ENCODE measurements at regions of chr7 and their contacts with region 1.

Region 1: DNA sequence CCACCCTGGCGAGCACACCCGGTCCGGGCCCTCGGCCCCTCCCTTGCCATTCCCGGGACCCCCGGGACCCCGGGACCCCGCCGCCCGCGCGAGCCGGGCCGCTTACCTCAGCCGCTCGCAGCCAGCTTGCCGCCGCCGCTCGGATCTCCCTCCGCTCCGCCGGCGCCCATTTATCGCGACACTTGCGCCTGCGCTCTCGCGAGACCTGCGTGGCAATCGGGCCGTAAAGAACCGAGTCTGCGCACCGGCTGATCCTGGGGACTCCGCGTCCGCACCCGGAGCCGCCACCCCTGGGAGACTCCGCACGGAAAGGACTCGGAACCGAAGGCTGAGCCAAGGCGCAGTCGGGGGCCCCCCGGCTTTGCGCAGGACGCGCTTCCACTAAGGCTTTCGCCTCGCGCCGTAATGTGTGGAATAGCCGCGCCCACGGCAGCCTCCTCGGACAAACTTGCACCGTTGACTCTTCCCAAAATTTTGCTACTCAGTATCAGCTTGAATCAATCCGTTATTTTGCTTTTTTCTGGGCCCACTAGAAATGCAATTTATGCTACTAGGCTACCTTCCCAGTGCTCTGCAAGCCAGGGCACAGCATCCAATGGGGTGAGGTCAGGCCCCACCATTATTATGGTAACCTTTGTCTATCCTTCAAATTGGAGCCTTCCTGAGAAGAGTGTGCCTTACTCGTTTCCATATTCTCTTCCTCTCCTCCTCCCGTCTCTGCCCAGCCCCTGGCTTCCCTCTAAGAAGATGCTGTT is at the start of gene MAD1L1:
- DNase-seq: peak; percentile 75 to 90 (median 88)
- ATAC-seq: peak; percentile 90
- H3K4me3 ChIP-seq: peak within 1 kb of the TSS; percentile 99
- H3K4me3 Mint-ChIP-seq: peak within 1 kb of the TSS; percentile 88 to 98 (median 95)
- H3K27ac ChIP-seq: peak within 1 kb of the TSS; percentile 80
- H3K27ac Mint-ChIP-seq: peak within 1 kb of the TSS; percentile 66 to 91 (median 86)
- H3K4me1 ChIP-seq: peaks cover 13 to 27% of the 10 kb centered on the region in 2 donors
- H3K4me1 Mint-ChIP-seq: peaks cover 16 to 58% (median 31%) of the 10 kb centered on the region in 7 donors
- H3K27me3 ChIP-seq: no peaks in the 10 kb centered on the region
- H3K27me3 Mint-ChIP-seq: no peaks in the 10 kb centered on the region
- total RNA-seq, gene MAD1L1: 112 to 141 (median 125) TPM

Region 2: DNA sequence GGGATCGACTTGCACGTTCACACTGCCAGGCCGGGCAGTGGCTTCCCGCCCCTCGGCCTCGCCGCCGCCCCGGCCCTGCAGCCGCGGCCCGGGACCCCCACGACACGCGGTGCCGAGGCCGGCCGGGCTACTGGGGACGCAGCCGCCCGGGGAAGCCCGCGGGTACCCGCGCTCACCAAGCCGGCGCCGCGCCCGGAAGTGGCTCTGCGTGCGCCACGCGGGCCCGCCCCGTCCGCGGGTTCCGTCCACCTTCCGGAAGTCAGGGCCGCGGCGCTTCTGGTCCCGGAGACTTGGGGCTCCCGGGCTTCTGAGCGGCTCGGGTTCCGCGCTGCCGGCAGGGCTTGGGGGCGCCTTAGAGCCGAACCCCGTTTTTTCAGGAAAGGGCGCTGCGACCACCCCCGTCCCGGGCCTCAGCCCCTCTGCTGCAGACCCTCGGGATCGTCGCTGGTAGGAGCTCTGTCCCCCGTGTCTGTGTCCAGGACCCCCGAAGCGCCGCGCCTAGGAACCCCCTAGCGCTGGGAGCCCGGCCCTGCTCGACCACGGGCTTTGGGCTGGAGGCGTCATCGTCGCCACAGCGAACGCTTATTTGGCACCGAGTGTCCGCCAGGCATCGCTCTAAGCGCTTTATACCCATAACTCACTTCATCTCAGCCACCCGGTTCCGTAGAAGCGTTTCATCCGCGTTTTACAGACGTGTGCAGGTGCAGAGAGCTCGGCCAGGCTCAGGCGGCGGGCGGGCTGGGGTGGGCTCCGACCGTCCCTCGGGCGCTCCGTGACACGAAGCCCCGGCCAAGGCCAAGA is 662.9 kb before region 1 on chr7 and contains the start of gene PSMG3:
- CTCF ChIA-PET with region 1: no interaction called
- POLR2A ChIA-PET with region 1: no interaction called
- intact Hi-C with region 1: loop called in 1 of 2 experiments (anchors 10 kb)
- DNase-seq: peak; percentile 72 to 91 (median 84)
- ATAC-seq: peak; percentile 94
- H3K4me3 ChIP-seq: peak within 1 kb of the TSS; percentile 90
- H3K4me3 Mint-ChIP-seq: peak within 1 kb of the TSS; percentile 77 to 91 (median 86)
- H3K27ac ChIP-seq: peak within 1 kb of the TSS; percentile 95
- H3K27ac Mint-ChIP-seq: peak within 1 kb of the TSS; percentile 81 to 93 (median 88)
- H3K4me1 ChIP-seq: peaks cover 3 to 16% of the 10 kb centered on the region in 2 donors
- H3K4me1 Mint-ChIP-seq: peaks cover 14 to 36% (median 26%) of the 10 kb centered on the region in 7 donors
- H3K27me3 ChIP-seq: no peaks in the 10 kb centered on the region
- H3K27me3 Mint-ChIP-seq: no peaks in the 10 kb centered on the region
- total RNA-seq, gene PSMG3: 12.1 to 31.8 (median 23.2) TPM

Region 3: DNA sequence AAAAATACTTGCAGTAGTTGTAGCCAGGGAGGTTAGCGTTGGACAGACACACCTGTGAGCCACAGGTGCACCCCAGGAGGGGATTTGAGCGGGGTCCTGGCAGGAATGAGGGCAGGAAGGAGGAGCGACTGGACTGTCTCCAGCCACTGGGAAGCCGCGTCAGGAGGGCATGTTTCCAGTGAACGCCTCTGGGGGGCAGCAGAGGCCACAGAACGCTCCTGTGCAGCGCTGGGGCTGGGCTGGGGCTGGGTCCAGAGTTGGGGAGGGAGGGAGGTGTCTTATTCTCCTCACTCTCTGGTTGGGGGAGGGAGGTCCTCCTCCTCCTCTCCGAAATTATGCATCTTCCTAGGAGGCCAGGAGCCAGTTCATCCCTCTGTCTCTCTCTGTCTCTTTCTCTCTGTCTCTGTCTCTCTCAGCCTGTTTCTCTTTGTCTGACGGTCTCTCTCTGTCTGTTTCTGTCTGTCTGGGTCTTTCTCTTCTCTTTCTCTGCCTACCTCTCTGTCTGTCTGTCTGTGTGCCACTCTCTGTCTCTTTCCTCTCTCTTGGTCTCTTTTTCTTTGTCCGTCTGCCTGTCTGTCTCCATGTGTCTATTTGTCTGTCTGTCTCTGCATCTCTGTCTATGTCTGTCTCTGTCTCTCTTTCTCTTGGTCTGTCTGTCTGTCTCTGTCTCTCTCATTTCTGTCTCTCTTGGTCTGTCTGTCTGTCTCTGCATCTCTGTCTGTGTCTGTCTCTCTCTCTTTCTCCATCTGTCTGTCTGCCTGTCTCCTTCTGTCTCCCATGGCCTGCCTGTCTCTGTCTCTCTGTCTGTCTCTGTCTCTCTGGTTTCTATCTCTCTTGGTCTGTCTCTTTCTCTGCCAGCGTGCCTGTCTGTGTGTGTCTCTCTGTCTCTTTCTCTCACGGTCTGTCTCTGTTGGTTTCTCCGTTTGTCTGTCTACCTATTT is 653.2 kb before region 1 on chr7:
- CTCF ChIA-PET with region 1: no interaction called
- POLR2A ChIA-PET with region 1: no interaction called
- intact Hi-C with region 1: loop called (anchors 1 to 10 kb)
- DNase-seq: peak; percentile 40 to 74 (median 60)
- ATAC-seq: peak; percentile 96
- H3K4me3 ChIP-seq: no peak overlapping the region
- H3K4me3 Mint-ChIP-seq: peak overlapping the region in 2 of 10 donors; percentile 37 to 49
- H3K27ac ChIP-seq: no peak overlapping the region
- H3K27ac Mint-ChIP-seq: peak overlapping the region in 7 of 9 donors; percentile 2 to 78 (median 45)
- H3K4me1 ChIP-seq: peaks cover 0 to 6% of the 10 kb centered on the region in 2 donors
- H3K4me1 Mint-ChIP-seq: peaks cover 6 to 18% (median 13%) of the 10 kb centered on the region in 7 donors
- H3K27me3 ChIP-seq: no peaks in the 10 kb centered on the region
- H3K27me3 Mint-ChIP-seq: no peaks in the 10 kb centered on the region

Region 4: GRCh38 chr7:1842321-1843221 is 390.4 kb before region 1 on chr7:
- CTCF ChIA-PET with region 1: no interaction called
- POLR2A ChIA-PET with region 1: no interaction called
- intact Hi-C with region 1: no loop called
- DNase-seq: no peak
- ATAC-seq: no peak
- H3K4me3 ChIP-seq: no peak overlapping the region
- H3K4me3 Mint-ChIP-seq: no peak overlapping the region
- H3K27ac ChIP-seq: no peak overlapping the region
- H3K27ac Mint-ChIP-seq: peak overlapping the region in 1 of 9 donors; percentile 20
- H3K4me1 ChIP-seq: no peaks in the 10 kb centered on the region
- H3K4me1 Mint-ChIP-seq: peaks cover 0 to 11% (median 4%) of the 10 kb centered on the region in 7 donors
- H3K27me3 ChIP-seq: no peaks in the 10 kb centered on the region
- H3K27me3 Mint-ChIP-seq: no peaks in the 10 kb centered on the region

Region 5: GRCh38 chr7:2248984-2249694 is 16.2 kb after region 1 on chr7:
- CTCF ChIA-PET with region 1: no interaction called
- POLR2A ChIA-PET with region 1: no interaction called
- intact Hi-C with region 1: no loop called
- DNase-seq: peak in 1 of 9 donors; percentile 47
- ATAC-seq: peak; percentile 63
- H3K4me3 ChIP-seq: no peak overlapping the region
- H3K4me3 Mint-ChIP-seq: peak overlapping the region in 6 of 10 donors; percentile 38 to 75 (median 54)
- H3K27ac ChIP-seq: no peak overlapping the region
- H3K27ac Mint-ChIP-seq: peak overlapping the region in 7 of 9 donors; percentile 38 to 81 (median 62)
- H3K4me1 ChIP-seq: peaks cover 2 to 15% of the 10 kb centered on the region in 2 donors
- H3K4me1 Mint-ChIP-seq: peaks cover 7 to 31% (median 21%) of the 10 kb centered on the region in 7 donors
- H3K27me3 ChIP-seq: no peaks in the 10 kb centered on the region
- H3K27me3 Mint-ChIP-seq: no peaks in the 10 kb centered on the region

Region 6: GRCh38 chr7:2354186-2354938 is 121.4 kb after region 1 on chr7 and contains the start of gene EIF3B:
- CTCF ChIA-PET with region 1: no interaction called
- POLR2A ChIA-PET with region 1: interaction called, 5 read pairs
- intact Hi-C with region 1: loop called (anchors 1 to 2 kb)
- DNase-seq: peak; percentile 87 to 97 (median 94)
- ATAC-seq: peak; percentile 90
- H3K4me3 ChIP-seq: peak within 1 kb of the TSS; percentile 89
- H3K4me3 Mint-ChIP-seq: peak within 1 kb of the TSS; percentile 90 to 100 (median 94)
- H3K27ac ChIP-seq: peak within 1 kb of the TSS; percentile 97
- H3K27ac Mint-ChIP-seq: peak within 1 kb of the TSS; percentile 98 to 100 (median 100)
- H3K4me1 ChIP-seq: peaks cover 25 to 38% of the 10 kb centered on the region in 2 donors
- H3K4me1 Mint-ChIP-seq: peaks cover 16 to 48% (median 31%) of the 10 kb centered on the region in 7 donors
- H3K27me3 ChIP-seq: no peaks in the 10 kb centered on the region
- H3K27me3 Mint-ChIP-seq: peaks cover 0 to 3% (median 0%) of the 10 kb centered on the region in 5 donors
- total RNA-seq, gene EIF3B: 127 to 189 (median 158) TPM

Measured in naive thymus-derived CD4-positive, alpha-beta T cell (primary cell).